MCF 10A (cell line): ENCODE measurements at regions of chr3 and their contacts with region 1.

Region 1: DNA sequence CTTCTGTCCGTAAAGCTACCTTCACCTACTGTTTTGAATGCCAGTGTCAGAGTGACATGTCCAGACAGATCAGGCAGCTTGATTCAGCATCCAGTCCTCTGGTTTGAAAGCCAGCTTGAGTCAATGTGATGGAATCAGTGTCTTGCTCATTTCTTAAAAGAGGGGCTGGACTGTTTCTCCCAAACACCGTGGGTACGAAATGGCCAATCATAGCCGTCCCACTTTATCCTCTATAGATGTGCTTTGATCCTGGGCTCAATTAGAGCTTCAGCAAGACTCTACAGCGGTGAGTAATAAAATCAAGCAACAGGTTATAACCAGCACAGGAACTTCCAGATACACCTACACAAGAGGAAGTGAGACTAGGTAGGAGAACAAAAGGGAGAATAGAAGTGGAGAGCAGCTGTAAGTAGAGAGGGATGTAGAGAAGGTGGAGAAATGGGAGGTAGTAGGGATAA is 17.0 kb upstream of the OR5K1 start:
- DNase-seq: peak; percentile 82
- H3K4me3 Mint-ChIP-seq: peak overlapping the region; percentile 41
- H3K27ac Mint-ChIP-seq: peak overlapping the region; percentile 72
- H3K4me1 Mint-ChIP-seq: peaks cover 18% of the 10 kb centered on the region
- H3K27me3 Mint-ChIP-seq: no peaks in the 10 kb centered on the region
- CTCF ChIP-seq: no peak

Region 2: GRCh38 chr3:98500039-98500438 is 54.1 kb after region 1 on chr3:
- CTCF ChIA-PET with region 1: no interaction called
- POLR2A ChIA-PET with region 1: no interaction called
- intact Hi-C with region 1: no loop called
- DNase-seq: no peak
- H3K4me3 Mint-ChIP-seq: no peak overlapping the region
- H3K27ac Mint-ChIP-seq: no peak overlapping the region
- H3K4me1 Mint-ChIP-seq: no peaks in the 10 kb centered on the region
- H3K27me3 Mint-ChIP-seq: no peaks in the 10 kb centered on the region
- CTCF ChIP-seq: no peak

Region 3: DNA sequence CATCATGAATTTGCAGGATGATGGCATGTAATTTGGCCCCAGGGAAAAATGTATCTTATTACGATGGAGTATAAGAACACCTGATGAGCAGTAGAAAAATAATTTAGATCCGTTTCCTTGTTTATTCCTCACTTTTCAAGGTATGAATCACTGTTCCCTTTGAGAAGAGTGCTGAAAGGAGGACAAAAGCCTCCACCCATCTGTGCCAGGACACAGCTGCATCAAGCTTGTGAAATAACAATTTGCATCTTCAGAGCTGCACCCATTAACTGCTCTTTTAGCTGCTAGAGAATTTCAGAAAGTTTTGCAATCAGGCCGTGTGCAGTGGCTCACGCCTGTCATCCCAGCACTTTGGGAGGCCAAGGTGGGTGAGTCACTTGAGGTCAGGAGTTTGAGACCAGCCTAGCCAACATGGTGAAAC is 67.1 kb after region 1 on chr3:
- CTCF ChIA-PET with region 1: interaction called, 3 read pairs
- POLR2A ChIA-PET with region 1: interaction called, 26 read pairs
- intact Hi-C with region 1: no loop called
- DNase-seq: peak; percentile 96
- H3K4me3 Mint-ChIP-seq: peak overlapping the region; percentile 56
- H3K27ac Mint-ChIP-seq: peak overlapping the region; percentile 76
- H3K4me1 Mint-ChIP-seq: peaks cover 25% of the 10 kb centered on the region
- H3K27me3 Mint-ChIP-seq: no peaks in the 10 kb centered on the region
- CTCF ChIP-seq: no peak

Region 4: DNA sequence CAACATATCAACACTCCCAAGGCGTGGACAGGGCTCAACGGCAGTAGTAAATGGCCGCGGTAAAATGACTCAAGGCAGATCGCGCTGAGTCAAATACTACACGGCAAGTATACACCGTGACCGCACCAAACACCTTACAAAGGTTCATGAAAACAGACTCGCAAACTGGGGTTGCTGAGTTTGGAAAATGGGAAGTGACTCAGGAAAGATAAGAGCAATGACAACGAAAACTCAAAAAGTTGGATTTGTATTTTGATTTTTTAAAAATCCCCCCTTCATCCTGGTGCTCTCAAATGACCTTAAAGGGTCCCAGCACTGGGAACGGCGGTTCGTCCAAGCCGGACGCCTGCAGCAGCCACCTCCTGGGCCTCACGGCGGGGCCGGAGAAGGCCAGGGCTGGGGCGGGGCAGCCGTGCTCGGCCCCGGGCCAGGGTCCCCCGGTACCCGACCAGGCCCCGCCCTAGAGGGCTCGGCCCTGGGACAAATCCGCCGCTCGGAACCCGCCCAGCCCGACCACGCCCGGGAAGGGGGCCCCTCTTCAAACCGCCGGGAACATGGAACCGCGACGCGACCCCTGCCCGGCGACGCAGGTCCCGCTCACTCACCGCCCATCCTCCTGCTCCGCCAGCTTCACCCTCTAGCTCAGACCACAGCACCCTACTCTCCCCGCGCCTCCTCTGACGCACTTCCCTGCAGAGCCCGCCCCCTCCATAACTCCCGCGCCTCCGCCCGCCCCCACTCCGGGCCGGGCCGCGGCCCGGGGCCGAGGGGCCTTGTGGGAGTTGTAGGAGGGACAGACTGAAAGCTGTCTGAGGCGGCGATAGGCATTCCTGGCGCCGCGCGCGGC is 76.5 kb after region 1 on chr3 and contains the start of gene CLDND1:
- CTCF ChIA-PET with region 1: no interaction called
- POLR2A ChIA-PET with region 1: interaction called, 34 read pairs
- intact Hi-C with region 1: no loop called
- DNase-seq: peak; percentile 98
- H3K4me3 Mint-ChIP-seq: peak within 1 kb of the TSS; percentile 85
- H3K27ac Mint-ChIP-seq: peak within 1 kb of the TSS; percentile 81
- H3K4me1 Mint-ChIP-seq: peaks cover 27% of the 10 kb centered on the region
- H3K27me3 Mint-ChIP-seq: no peaks in the 10 kb centered on the region
- CTCF ChIP-seq: no peak
- total RNA-seq, gene CLDND1: 128 and 173 TPM in 2 replicates

Region 5: GRCh38 chr3:98744283-98744682 is 298.3 kb after region 1 on chr3:
- CTCF ChIA-PET with region 1: no interaction called
- POLR2A ChIA-PET with region 1: no interaction called
- intact Hi-C with region 1: no loop called
- DNase-seq: no peak
- H3K4me3 Mint-ChIP-seq: no peak overlapping the region
- H3K27ac Mint-ChIP-seq: no peak overlapping the region
- H3K4me1 Mint-ChIP-seq: peaks cover 35% of the 10 kb centered on the region
- H3K27me3 Mint-ChIP-seq: no peaks in the 10 kb centered on the region
- CTCF ChIP-seq: no peak